Posterior vena cava (tissue), 2 donors: ENCODE measurements at regions of chr1 and their contacts with region 1.

Region 1: DNA sequence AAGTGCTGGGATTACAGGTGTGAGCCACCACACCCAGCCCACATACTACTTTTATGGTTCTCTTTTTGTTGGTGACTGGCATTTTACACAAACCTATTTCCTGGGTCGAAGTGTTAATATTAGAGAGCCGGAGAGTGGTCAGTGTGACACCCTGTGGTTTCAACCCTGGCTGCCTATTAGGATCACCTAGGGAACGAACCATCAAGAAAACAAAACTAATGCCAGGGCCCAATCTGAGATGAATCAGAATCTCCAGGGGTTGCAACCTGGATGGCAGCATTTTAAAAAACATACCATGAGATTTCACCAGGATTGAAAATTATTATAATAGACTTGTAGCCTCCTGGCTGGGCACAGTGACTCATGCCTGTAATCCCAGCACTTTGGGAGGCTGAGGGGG is 6.1 kb downstream of the MRPS21 start:
- DNase-seq: no peak

Region 2: DNA sequence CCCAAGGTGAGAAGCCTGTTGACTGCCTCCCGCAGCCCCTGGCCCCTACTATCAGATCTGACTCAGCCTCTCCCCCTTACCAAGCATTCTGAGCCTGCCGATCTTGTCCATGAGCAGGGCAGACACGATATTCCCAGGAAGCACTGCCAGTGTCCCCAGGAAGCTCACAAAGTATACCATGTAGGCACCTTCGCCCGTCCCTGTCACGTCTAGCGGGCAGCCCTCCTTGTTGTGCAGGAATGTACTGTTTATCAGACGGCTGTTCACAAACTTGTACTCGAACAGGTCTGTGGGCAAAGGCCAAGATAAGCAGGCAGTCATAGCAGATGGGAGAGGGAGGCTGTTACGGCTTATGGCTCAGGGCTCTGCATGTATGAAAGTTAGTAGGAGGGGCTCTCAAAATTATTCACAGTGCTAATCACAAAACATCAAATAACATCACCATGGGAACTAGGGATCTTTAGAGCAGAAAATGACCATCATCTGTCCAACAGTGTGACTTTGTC is 393.1 kb before region 1 on chr1:
- intact Hi-C with region 1: no loop called
- DNase-seq: no peak

Region 3: DNA sequence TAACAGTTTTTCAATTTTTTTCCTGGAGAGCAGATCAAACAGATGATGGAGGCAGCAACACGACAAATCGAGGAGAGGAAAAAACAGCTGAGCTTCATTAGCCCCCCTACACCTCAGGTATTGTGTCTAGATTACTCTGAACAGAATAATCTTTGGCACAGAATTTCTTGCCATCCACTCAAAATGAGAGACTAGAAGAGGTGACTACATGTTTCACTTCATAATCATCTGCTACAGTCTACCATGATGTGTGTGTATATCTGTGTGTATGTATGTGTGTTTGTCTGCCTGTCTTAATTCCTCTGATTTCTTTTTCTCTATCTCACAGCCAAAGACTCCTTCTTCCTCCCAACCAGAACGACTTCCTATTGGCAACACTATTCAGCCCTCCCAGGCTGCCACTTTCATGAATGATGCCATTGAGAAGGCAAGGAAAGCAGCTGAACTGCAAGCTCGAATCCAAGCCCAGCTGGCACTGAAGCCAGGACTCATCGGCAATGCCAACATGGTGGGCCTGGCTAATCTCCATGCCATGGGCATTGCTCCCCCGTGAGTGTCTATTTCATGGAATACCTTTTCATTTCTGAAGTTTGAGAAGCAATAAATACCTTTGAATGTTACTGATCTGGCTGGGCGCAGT is 33.1 kb after region 1 on chr1:
- intact Hi-C with region 1: loop called in 1 of 2 experiments (anchors 1 kb)
- DNase-seq: no peak